Activated CD4-positive, alpha-beta T cell treated with anti-CD3 and anti-CD28 coated beads, Interleukin-2, amount 10 ng/mL, durations not matched to agents 7 days and 5 days (primary cell): ENCODE measurements at regions of chr15 and their contacts with region 1.

Region 1: DNA sequence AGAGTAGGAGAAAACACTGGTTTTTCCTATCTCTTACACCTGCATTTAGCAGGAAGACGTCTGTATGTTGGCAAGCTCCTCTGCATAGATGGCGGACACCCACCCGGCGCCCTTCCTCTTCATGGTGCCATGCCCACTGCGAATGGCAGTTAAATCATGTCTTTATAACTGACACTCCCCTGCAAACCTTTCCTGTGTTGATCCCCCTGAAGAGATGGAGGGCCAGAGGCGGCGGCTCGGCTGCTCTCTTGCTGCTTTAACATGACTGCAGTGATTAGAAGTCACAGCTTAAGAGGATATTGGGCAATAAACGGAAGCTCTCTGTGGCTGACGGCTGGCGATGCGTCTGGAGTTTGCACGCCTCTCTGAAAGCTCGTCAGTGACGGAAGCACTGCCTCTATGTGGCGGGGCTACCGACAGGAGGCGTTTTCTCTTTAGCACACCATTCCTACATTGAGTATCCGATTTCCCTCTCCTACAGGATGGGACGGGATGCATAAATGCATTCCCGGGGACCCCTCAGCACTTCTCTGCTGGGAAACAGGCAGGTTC is 25.5 kb upstream of the SNRPA1 start:
- DNase-seq: peak; percentile 77
- H3K4me3 Mint-ChIP-seq: peak overlapping the region; percentile 64
- H3K27ac Mint-ChIP-seq: peak overlapping the region; percentile 91
- H3K4me1 Mint-ChIP-seq: peaks cover 20% of the 10 kb centered on the region
- H3K27me3 Mint-ChIP-seq: no peaks in the 10 kb centered on the region

Region 2: GRCh38 chr15:101188637-101189408 is 131.8 kb before region 1 on chr15:
- CTCF ChIA-PET with region 1: no interaction called
- POLR2A ChIA-PET with region 1: no interaction called
- DNase-seq: no peak
- H3K4me3 Mint-ChIP-seq: peak overlapping the region; percentile 26
- H3K27ac Mint-ChIP-seq: peak overlapping the region; percentile 82
- H3K4me1 Mint-ChIP-seq: peaks cover 67% of the 10 kb centered on the region
- H3K27me3 Mint-ChIP-seq: no peaks in the 10 kb centered on the region

Region 3: DNA sequence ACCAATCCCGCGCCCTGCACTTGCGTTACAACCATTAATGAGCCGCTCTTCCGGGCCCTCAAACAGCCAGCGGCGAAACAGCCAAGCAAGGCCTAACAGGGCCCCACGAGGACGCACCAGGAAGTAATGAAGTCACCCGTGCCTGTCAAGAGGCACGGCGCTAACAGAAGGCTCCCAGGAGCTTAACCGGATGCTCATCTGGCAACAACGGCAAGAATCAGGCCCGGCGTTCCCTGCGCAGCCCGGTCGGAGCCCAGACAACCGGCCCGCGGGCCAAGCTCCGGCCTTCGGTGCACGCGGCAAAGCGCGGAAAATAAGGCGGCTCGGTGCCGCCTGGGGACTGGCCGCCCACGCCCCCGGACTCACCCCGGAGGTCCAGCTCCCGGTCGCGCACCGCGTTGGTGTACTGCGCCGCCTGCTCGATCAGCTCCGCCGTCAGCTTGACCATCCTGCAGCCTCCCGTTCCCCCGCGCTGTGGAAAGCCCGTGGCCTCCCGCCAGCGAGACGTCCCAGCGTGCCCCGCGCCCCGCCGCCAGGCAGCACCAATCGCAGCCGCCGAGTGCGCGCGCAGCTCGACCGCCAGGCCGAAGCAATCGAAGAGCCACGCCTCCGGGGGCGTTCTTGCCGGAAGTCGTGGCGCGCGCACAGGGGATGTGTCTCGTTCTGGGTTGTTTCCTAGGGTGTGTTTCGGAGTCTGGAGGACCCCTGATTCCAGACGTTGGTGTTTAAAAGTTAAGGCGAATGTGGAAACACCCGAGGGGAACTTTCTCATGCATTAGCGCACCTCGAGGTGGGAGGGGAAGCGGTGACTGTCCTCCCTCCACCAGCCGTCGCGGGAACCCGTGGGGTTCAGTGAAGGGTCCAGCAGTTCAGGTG is 25.6 kb before region 1 on chr15 and contains the start of gene SNRPA1:
- CTCF ChIA-PET with region 1: interaction called, 23 read pairs
- POLR2A ChIA-PET with region 1: interaction called, 4 read pairs
- DNase-seq: peak; percentile 96
- H3K4me3 Mint-ChIP-seq: peak within 1 kb of the TSS; percentile 99
- H3K27ac Mint-ChIP-seq: peak within 1 kb of the TSS; percentile 95
- H3K4me1 Mint-ChIP-seq: peaks cover 43% of the 10 kb centered on the region
- H3K27me3 Mint-ChIP-seq: no peaks in the 10 kb centered on the region
- total RNA-seq, gene SNRPA1: 92.8 to 109 TPM

Region 4: GRCh38 chr15:101307048-101307896 is 13.3 kb before region 1 on chr15:
- CTCF ChIA-PET with region 1: interaction called, 28 read pairs
- POLR2A ChIA-PET with region 1: no interaction called
- DNase-seq: no peak
- H3K4me3 Mint-ChIP-seq: no peak overlapping the region
- H3K27ac Mint-ChIP-seq: no peak overlapping the region
- H3K4me1 Mint-ChIP-seq: no peaks in the 10 kb centered on the region
- H3K27me3 Mint-ChIP-seq: no peaks in the 10 kb centered on the region

Region 5: GRCh38 chr15:101333401-101333800 is 12.8 kb after region 1 on chr15:
- CTCF ChIA-PET with region 1: interaction called, 33 read pairs
- POLR2A ChIA-PET with region 1: interaction called, 3 read pairs
- DNase-seq: no peak
- H3K4me3 Mint-ChIP-seq: no peak overlapping the region
- H3K27ac Mint-ChIP-seq: peak overlapping the region; percentile 95
- H3K4me1 Mint-ChIP-seq: peaks cover 18% of the 10 kb centered on the region
- H3K27me3 Mint-ChIP-seq: peaks cover 8% of the 10 kb centered on the region

Region 6: DNA sequence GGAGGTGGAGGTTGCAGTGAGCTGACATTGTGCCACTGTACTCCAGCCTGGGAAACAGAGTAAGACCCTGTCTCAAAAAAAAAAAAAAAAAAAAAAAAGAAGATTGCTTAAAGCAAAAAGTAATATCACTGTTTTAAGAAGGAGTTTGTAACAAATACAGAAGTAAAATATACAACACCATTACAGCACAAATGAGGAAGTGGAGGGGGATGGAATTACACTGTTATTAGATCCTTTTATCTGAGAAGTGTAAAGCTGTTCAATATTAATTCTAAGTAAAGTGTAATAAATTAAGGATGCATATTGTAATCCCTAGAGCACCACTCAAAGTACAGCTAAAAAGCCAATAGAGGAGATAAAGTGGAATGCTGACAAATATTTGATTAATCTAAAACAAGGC is 21.5 kb after region 1 on chr15:
- CTCF ChIA-PET with region 1: interaction called, 11 read pairs
- POLR2A ChIA-PET with region 1: interaction called, 3 read pairs
- DNase-seq: no peak
- H3K4me3 Mint-ChIP-seq: no peak overlapping the region
- H3K27ac Mint-ChIP-seq: no peak overlapping the region
- H3K4me1 Mint-ChIP-seq: no peaks in the 10 kb centered on the region
- H3K27me3 Mint-ChIP-seq: peaks cover 36% of the 10 kb centered on the region

Region 7: GRCh38 chr15:101482526-101483371 is 162.2 kb after region 1 on chr15:
- CTCF ChIA-PET with region 1: no interaction called
- POLR2A ChIA-PET with region 1: no interaction called
- DNase-seq: no peak
- H3K4me3 Mint-ChIP-seq: no peak overlapping the region
- H3K27ac Mint-ChIP-seq: no peak overlapping the region
- H3K4me1 Mint-ChIP-seq: no peaks in the 10 kb centered on the region
- H3K27me3 Mint-ChIP-seq: peaks cover 34% of the 10 kb centered on the region

Region 8: DNA sequence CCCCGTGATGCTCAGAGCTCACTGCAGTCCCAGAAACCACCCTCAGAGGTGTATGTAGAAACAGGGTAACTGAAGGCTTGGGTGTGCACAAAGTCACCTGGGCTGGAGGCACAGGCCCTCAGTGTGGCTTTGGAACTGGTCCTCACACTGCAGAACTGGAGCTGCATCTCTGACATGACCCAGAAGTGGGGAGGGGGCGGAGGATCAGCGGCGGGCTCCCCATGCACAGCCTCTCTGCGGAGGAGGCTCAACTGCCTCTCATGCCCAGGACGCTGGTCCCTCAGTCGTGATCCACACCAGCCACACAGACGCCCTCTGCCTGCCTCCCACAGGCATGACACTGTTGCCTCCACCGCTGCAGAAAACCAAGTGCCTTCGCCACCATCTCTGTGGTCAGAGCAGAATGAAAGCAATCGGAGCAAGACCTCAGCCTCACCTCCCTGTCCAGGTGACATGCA is 257.9 kb after region 1 on chr15:
- CTCF ChIA-PET with region 1: no interaction called
- POLR2A ChIA-PET with region 1: no interaction called
- DNase-seq: no peak
- H3K4me3 Mint-ChIP-seq: no peak overlapping the region
- H3K27ac Mint-ChIP-seq: no peak overlapping the region
- H3K4me1 Mint-ChIP-seq: no peaks in the 10 kb centered on the region
- H3K27me3 Mint-ChIP-seq: peaks cover 14% of the 10 kb centered on the region

Region 9: DNA sequence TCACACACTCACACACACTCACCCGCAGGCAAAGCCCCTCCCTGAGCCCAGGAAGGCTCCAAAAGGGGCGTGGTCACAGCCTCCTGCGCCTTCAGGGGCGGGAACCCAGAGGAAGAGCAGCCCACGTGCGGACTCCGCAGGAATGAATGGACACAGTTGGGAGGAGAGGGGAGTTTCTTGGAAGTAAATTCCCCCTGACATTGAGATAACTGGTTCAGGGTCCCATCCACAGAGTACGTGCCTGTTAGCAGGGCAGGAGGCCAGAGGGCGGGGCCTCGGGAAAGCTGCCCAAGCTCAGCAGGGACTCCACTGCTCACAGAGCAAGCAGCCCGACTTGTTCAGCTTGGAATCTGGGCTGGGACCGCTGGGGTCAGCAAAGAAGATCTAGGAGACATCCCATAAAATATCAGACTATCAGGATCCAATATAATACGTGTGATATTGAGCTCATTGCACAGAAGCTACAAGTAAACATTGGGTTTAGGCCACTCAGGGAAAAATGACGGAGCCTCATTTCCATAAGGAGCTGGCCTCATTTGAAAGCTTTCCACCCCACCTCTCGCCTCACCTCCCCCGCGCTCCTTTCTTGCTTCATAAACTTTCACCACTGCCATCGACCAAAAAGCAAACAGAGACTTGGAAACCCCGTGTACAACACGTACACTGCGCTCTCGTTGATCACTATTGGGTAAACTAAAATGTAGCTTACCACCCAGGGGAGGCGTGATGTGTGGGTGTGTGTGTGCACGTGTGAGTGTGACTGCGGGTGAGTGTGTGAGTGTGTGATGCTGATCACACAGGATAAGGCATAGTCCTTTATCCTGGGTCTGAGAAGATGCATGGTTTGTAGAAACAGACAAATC is 295.6 kb after region 1 on chr15:
- CTCF ChIA-PET with region 1: no interaction called
- POLR2A ChIA-PET with region 1: no interaction called
- DNase-seq: no peak
- H3K4me3 Mint-ChIP-seq: no peak overlapping the region
- H3K27ac Mint-ChIP-seq: no peak overlapping the region
- H3K4me1 Mint-ChIP-seq: no peaks in the 10 kb centered on the region
- H3K27me3 Mint-ChIP-seq: no peaks in the 10 kb centered on the region